WTC11 (cell line): ENCODE measurements at regions of chr17 and their contacts with region 1.

Region 1: DNA sequence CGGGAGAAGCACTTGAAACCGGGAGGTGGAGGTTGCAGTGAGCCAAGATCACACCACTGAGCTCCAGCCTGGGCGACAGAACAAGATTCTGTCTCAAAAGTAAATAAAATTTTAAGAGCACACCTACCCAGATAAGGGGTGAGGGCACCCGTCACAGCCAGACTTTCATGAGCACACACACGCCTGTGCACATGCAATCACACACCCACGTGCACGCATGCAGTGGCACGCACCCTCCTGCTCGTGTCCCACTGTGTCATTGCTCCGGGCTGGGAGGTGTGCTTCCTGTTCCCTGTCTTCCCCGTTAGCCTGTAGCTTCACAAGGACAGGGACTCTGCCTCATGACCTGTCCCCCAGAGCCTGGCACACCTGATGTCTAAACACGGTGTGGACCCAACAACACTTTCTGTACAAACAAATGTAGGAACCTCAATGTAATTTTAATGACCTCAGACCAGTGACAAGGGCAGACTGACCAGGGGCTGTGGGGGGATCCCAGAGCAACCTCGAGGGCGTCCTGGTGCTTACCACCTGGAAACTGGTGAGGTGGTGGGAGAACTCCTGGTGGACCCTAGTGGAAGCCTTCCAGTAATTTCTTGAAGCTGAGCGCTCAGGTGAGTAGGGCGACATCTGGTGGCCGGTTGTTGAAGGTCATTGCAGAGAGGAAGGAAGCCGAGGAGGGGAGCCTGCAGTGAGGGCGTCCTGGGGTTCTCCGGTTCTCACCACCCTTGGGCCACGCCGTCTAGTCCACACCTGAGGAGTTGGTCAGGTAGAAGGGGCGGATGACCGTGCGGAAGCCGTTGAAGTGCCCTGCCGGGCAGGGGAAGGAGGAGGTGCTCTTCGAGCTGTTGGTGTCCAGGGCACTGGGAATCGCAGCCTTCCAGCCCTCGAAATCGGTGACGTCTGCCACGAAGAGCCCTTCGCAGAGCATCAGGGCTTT is 8.6 kb downstream of the LGALS3BP start:
- DNase-seq: peak; percentile 87
- ATAC-seq: peak; percentile 48
- H3K4me3 Mint-ChIP-seq: no peak overlapping the region
- H3K27ac Mint-ChIP-seq: peak overlapping the region; percentile 75
- H3K4me1 Mint-ChIP-seq: peaks cover 24% of the 10 kb centered on the region
- H3K27me3 Mint-ChIP-seq: no peaks in the 10 kb centered on the region; the same call in 1 of the 2 replicates
- CTCF ChIP-seq: peak; percentile 75

Region 2: GRCh38 chr17:78840725-78841611 is 130.1 kb before region 1 on chr17 and contains the start of gene USP36:
- CTCF ChIA-PET with region 1: interaction called, 11 read pairs
- POLR2A ChIA-PET with region 1: no interaction called
- DNase-seq: peak; percentile 99
- ATAC-seq: peak; percentile 90
- H3K4me3 Mint-ChIP-seq: peak within 1 kb of the TSS; percentile 84
- H3K27ac Mint-ChIP-seq: peak within 1 kb of the TSS; percentile 87
- H3K4me1 Mint-ChIP-seq: peaks cover 21% of the 10 kb centered on the region
- H3K27me3 Mint-ChIP-seq: no peaks in the 10 kb centered on the region
- CTCF ChIP-seq: no peak
- total RNA-seq, gene USP36: 62.0 to 74.0 TPM (median 65.8 TPM) in 3 replicates

Region 3: GRCh38 chr17:78852709-78853121 is 118.4 kb before region 1 on chr17:
- CTCF ChIA-PET with region 1: interaction called, 20 read pairs
- POLR2A ChIA-PET with region 1: no interaction called
- DNase-seq: peak; percentile 52
- ATAC-seq: peak; percentile 69
- H3K4me3 Mint-ChIP-seq: no peak overlapping the region
- H3K27ac Mint-ChIP-seq: peak overlapping the region; percentile 3; the same call in 1 of the 2 replicates
- H3K4me1 Mint-ChIP-seq: peaks cover 2% of the 10 kb centered on the region; the same call in 1 of the 2 replicates
- H3K27me3 Mint-ChIP-seq: no peaks in the 10 kb centered on the region
- CTCF ChIP-seq: no peak

Region 4: GRCh38 chr17:78953356-78954265 is 17.5 kb before region 1 on chr17:
- CTCF ChIA-PET with region 1: interaction called, 12 read pairs
- POLR2A ChIA-PET with region 1: no interaction called
- DNase-seq: no peak
- ATAC-seq: no peak
- H3K4me3 Mint-ChIP-seq: no peak overlapping the region
- H3K27ac Mint-ChIP-seq: no peak overlapping the region
- H3K4me1 Mint-ChIP-seq: no peaks in the 10 kb centered on the region
- H3K27me3 Mint-ChIP-seq: peaks cover 6% of the 10 kb centered on the region
- CTCF ChIP-seq: no peak